ENCODE measurements at regions of chr4 and their contacts with region 1.

Region 1: DNA sequence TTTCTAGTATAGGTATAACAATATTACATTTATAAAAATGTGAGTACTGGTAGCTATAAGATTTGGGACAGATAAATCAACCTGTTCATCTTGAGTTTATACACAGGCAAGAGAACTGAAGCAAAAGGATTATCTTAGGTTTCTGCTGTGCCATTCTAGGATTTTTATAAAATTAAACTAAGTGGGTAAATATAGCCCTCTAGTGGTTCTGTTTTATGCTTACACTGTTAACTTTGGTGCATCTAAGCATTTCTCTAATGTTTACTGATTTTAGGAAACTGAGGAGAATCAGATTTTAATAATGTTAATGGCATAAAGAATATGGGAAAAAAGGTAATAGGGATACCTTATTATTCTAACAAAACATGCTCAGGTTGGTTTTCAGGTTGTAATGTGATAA is 1.1 kb upstream of the RRH start:
- DNase-seq: peak; percentile 18
- CTCF ChIP-seq: peak; percentile 37

Region 2: GRCh38 chr4:109815151-109816081 is 11.3 kb before region 1 on chr4 and contains the start of gene GAR1:
- CTCF ChIA-PET with region 1: interaction called, 13 read pairs
- POLR2A ChIA-PET with region 1: no interaction called
- DNase-seq: peak; percentile 93
- CTCF ChIP-seq: no peak